Caco-2 (cell line): ENCODE measurements at regions of chr4 and their contacts with region 1.

Region 1: GRCh38 chr4:139167774-139168444 is 9.1 kb downstream of the ELF2 start:
- DNase-seq: peak in 1 of 2 experiments; percentile 59
- H3K4me3 ChIP-seq: no peak overlapping the region
- H3K4me3 Mint-ChIP-seq: no peak overlapping the region
- H3K27ac Mint-ChIP-seq: no peak overlapping the region
- H3K4me1 ChIP-seq: peaks cover 22% of the 10 kb centered on the region
- H3K4me1 Mint-ChIP-seq: peaks cover 12% of the 10 kb centered on the region
- H3K27me3 ChIP-seq: no peaks in the 10 kb centered on the region
- H3K27me3 Mint-ChIP-seq: no peaks in the 10 kb centered on the region
- CTCF ChIP-seq: peak; percentile 55 to 59

Region 2: GRCh38 chr4:139137763-139138162 is 30.1 kb before region 1 on chr4:
- CTCF ChIA-PET with region 1: no interaction called
- POLR2A ChIA-PET with region 1: no interaction called
- intact Hi-C with region 1: loop called (anchors 2 kb)
- DNase-seq: no peak
- H3K4me3 ChIP-seq: no peak overlapping the region
- H3K4me3 Mint-ChIP-seq: no peak overlapping the region
- H3K27ac Mint-ChIP-seq: no peak overlapping the region
- H3K4me1 ChIP-seq: 0 out of 2 replicates have a peak, but pooled peaks cover 5% of the 10 kb centered on the region
- H3K4me1 Mint-ChIP-seq: peaks cover 15% of the 10 kb centered on the region
- H3K27me3 ChIP-seq: no peaks in the 10 kb centered on the region
- H3K27me3 Mint-ChIP-seq: no peaks in the 10 kb centered on the region
- CTCF ChIP-seq: no peak

Region 3: GRCh38 chr4:139153420-139154133 is 14.3 kb before region 1 on chr4:
- CTCF ChIA-PET with region 1: interaction called, 24 read pairs
- POLR2A ChIA-PET with region 1: interaction called, 4 read pairs
- intact Hi-C with region 1: loop called (anchors 1 kb)
- DNase-seq: peak in 1 of 2 experiments; percentile 60
- H3K4me3 ChIP-seq: no peak overlapping the region
- H3K4me3 Mint-ChIP-seq: peak overlapping the region; percentile 32
- H3K27ac Mint-ChIP-seq: peak overlapping the region; percentile 90
- H3K4me1 ChIP-seq: peaks cover 60% of the 10 kb centered on the region
- H3K4me1 Mint-ChIP-seq: peaks cover 39% of the 10 kb centered on the region
- H3K27me3 ChIP-seq: no peaks in the 10 kb centered on the region
- H3K27me3 Mint-ChIP-seq: no peaks in the 10 kb centered on the region
- CTCF ChIP-seq: no peak

Region 4: GRCh38 chr4:139184129-139184528 is 16.2 kb after region 1 on chr4:
- CTCF ChIA-PET with region 1: no interaction called
- POLR2A ChIA-PET with region 1: no interaction called
- intact Hi-C with region 1: no loop called
- DNase-seq: no peak
- H3K4me3 ChIP-seq: no peak overlapping the region
- H3K4me3 Mint-ChIP-seq: no peak overlapping the region
- H3K27ac Mint-ChIP-seq: no peak overlapping the region
- H3K4me1 ChIP-seq: peaks cover 8% of the 10 kb centered on the region; the same call in 1 of the 2 replicates
- H3K4me1 Mint-ChIP-seq: peaks cover 10% of the 10 kb centered on the region
- H3K27me3 ChIP-seq: no peaks in the 10 kb centered on the region
- H3K27me3 Mint-ChIP-seq: no peaks in the 10 kb centered on the region
- CTCF ChIP-seq: no peak

Region 5: DNA sequence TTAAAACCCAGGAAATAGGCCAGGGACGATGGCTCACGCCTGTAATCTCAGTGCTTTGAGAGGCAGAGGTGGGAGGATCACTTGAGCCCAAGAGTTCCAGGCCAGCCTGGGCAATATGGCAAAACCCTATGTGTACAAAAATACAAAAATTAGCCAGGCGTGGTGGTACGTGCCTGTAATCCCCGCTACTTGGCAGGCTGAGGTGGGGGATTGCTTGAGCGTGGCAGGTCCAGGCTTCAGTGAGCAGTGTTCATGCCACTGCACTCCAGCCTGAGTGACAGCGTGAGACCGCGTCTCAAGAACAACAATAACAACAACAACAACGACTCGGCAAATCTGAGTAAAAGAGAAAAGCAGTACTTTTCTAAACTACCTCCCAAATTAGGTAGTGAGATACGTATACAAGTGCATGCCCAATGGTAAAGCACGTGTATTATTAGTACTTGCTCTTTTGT is 147.3 kb after region 1 on chr4:
- CTCF ChIA-PET with region 1: no interaction called
- POLR2A ChIA-PET with region 1: no interaction called
- intact Hi-C with region 1: no loop called
- DNase-seq: no peak
- H3K4me3 ChIP-seq: no peak overlapping the region
- H3K4me3 Mint-ChIP-seq: no peak overlapping the region
- H3K27ac Mint-ChIP-seq: no peak overlapping the region
- H3K4me1 ChIP-seq: peaks cover 5% of the 10 kb centered on the region; the same call in 1 of the 2 replicates
- H3K4me1 Mint-ChIP-seq: peaks cover 14% of the 10 kb centered on the region
- H3K27me3 ChIP-seq: no peaks in the 10 kb centered on the region
- H3K27me3 Mint-ChIP-seq: no peaks in the 10 kb centered on the region
- CTCF ChIP-seq: no peak

Region 6: DNA sequence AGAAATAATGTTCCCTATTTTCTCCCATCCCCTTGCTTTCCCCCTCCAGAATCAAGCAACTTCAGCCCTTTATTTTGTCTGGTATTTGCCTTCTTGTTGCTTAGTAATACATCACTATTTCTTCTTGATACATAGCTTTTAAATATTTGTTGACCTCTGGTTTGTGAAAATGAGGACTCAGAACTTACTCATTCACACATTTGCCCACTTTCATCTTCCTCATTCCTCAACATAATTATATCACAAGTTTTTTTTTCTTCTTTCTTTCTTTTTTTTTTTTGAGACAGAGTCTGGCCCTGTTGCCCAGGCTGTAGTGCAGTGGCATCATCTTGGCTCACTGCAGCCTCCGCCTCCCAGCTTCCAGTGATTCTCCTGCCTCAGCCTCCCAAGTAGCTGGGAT is 163.3 kb after region 1 on chr4:
- CTCF ChIA-PET with region 1: no interaction called
- POLR2A ChIA-PET with region 1: no interaction called
- intact Hi-C with region 1: no loop called
- DNase-seq: no peak
- H3K4me3 ChIP-seq: no peak overlapping the region
- H3K4me3 Mint-ChIP-seq: no peak overlapping the region
- H3K27ac Mint-ChIP-seq: no peak overlapping the region
- H3K4me1 ChIP-seq: no peaks in the 10 kb centered on the region
- H3K4me1 Mint-ChIP-seq: peaks cover 15% of the 10 kb centered on the region
- H3K27me3 ChIP-seq: no peaks in the 10 kb centered on the region
- H3K27me3 Mint-ChIP-seq: no peaks in the 10 kb centered on the region
- CTCF ChIP-seq: no peak